Common myeloid progenitor, CD34-positive (primary cell): ENCODE measurements at regions of chr10 and their contacts with region 1.

Region 1: GRCh38 chr10:80459047-80459931 is 5.2 kb downstream of the TSPAN14 start:
- DNase-seq: peak; percentile 68 to 89 (median 85)
- H3K4me3 ChIP-seq: peak overlapping the region in 4 of 7 experiments; percentile 2 to 51 (median 24)
- H3K27ac ChIP-seq: peak overlapping the region in 1 of 2 experiments; percentile 71
- H3K4me1 ChIP-seq: peaks cover 21 to 88% (median 80%) of the 10 kb centered on the region in 4 experiments
- H3K27me3 ChIP-seq: no peaks in the 10 kb centered on the region

Region 2: DNA sequence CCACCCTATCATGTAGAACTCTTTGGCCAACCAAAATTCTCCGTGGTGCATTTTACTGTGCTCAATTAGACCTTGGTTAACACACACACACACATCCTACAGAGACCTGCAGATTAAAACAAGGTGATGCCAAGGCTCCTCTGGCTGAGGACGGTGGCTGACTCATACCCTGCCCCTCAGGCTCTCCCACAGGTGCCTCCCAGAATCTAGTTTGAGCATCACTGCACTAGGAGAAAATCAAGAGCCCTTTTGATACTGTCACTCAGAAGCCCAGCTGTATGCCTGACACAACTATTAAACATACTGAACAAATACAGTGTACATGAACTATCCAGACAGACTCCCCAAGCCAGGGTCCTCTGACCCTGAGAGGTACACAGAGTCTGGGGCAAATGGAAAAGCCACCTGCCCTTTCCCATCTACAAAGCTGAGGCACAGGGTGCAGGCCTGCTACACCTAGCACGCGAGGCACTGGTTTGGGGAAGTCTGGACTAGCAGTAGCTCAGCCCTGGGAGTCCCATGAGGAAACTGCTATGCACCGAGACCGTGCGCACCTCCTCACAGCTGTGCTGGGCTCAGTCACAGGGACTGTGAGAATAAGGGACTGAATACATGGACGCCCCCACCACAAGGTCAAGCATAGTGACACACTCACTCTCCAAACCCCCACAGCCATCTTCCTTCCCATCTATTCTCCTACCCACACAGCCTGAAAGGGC is 178.2 kb before region 1 on chr10:
- CTCF ChIA-PET with region 1: no interaction called
- POLR2A ChIA-PET with region 1: no interaction called
- DNase-seq: no peak
- H3K4me3 ChIP-seq: no peak overlapping the region
- H3K27ac ChIP-seq: no peak overlapping the region
- H3K4me1 ChIP-seq: no peaks in the 10 kb centered on the region
- H3K27me3 ChIP-seq: no peaks in the 10 kb centered on the region

Region 3: DNA sequence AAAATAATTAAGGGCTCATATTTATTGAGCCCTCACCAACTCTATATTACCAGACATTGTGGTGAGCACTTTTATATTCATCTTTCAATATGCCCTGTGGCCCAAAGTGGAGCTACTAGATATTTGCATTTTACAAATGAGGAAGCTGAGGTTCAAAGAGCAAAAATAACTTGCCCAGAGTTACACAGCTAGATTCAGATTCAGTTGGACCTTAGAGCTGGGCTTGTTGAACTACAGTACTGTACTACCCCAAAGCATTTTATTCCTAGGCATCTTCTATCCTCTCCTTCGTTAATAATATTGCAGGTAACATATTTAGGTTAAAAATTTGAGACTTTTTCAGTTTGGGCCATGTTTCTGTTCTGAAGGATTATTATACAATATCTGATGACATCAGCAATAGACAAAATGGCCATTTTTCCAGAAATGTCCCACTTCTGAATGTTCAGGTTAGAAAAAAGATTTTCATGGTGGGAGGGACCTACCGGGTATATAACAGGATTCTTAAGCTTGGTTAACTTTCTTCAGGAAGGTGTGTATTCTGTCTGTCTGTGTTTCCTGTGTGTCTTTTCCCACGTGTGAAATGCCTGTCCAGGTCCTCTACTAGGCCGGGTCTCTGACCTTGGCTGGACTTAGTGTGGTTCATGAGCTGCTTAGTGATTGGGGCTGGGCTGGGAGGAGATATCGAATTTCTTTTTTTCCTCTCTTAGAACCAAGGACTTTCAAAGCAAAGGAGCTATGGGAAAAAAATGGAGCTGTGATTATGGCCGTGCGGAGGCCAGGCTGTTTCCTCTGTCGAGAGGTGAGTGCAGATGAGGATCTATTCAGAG is 37.4 kb before region 1 on chr10:
- CTCF ChIA-PET with region 1: no interaction called
- POLR2A ChIA-PET with region 1: no interaction called
- DNase-seq: peak in 2 of 3 donors; percentile 40 to 55
- H3K4me3 ChIP-seq: no peak overlapping the region
- H3K27ac ChIP-seq: no peak overlapping the region
- H3K4me1 ChIP-seq: peaks cover 0 to 10% (median 4%) of the 10 kb centered on the region in 4 experiments
- H3K27me3 ChIP-seq: no peaks in the 10 kb centered on the region

Region 4: GRCh38 chr10:80472234-80473095 is 13.2 kb after region 1 on chr10:
- CTCF ChIA-PET with region 1: interaction called, 11 read pairs
- POLR2A ChIA-PET with region 1: interaction called, 5 read pairs
- DNase-seq: no peak
- H3K4me3 ChIP-seq: no peak overlapping the region
- H3K27ac ChIP-seq: no peak overlapping the region
- H3K4me1 ChIP-seq: peaks cover 4 to 17% (median 15%) of the 10 kb centered on the region in 4 experiments
- H3K27me3 ChIP-seq: no peaks in the 10 kb centered on the region

Region 5: GRCh38 chr10:80487791-80488538 is 28.7 kb after region 1 on chr10:
- CTCF ChIA-PET with region 1: interaction called, 21 read pairs
- POLR2A ChIA-PET with region 1: interaction called, 4 read pairs
- DNase-seq: peak; percentile 39 to 87 (median 81)
- H3K4me3 ChIP-seq: peak overlapping the region in 1 of 7 experiments; percentile 32
- H3K27ac ChIP-seq: peak overlapping the region in 1 of 2 experiments; percentile 54
- H3K4me1 ChIP-seq: peaks cover 22 to 69% (median 57%) of the 10 kb centered on the region in 4 experiments
- H3K27me3 ChIP-seq: no peaks in the 10 kb centered on the region